Psoas muscle (tissue), 8 donors: ENCODE measurements at regions of chr1 and their contacts with region 1.

Region 1: GRCh38 chr1:234309598-234310459 is 63.4 kb upstream of the COA6 start:
- DNase-seq: peak; percentile 51 to 70
- ATAC-seq: peak; percentile 82 to 96 (median 86)
- H3K4me3 ChIP-seq: peak overlapping the region; percentile 46
- H3K27ac ChIP-seq: no peak overlapping the region
- H3K4me1 ChIP-seq: peaks cover 3% of the 10 kb centered on the region
- H3K27me3 ChIP-seq: no peaks in the 10 kb centered on the region
- CTCF ChIP-seq: peak; percentile 86

Region 2: GRCh38 chr1:234114648-234115307 is 195.1 kb before region 1 on chr1:
- intact Hi-C with region 1: loop called in 1 of 2 experiments (anchors 1 kb)
- DNase-seq: no peak
- ATAC-seq: peak in 3 of 4 donors; percentile 49 to 66 (median 60)
- H3K4me3 ChIP-seq: no peak overlapping the region
- H3K27ac ChIP-seq: no peak overlapping the region
- H3K4me1 ChIP-seq: no peaks in the 10 kb centered on the region
- H3K27me3 ChIP-seq: peaks cover 0 to 12% (median 2%) of the 10 kb centered on the region in 3 donors
- CTCF ChIP-seq: peak; percentile 65

Region 3: DNA sequence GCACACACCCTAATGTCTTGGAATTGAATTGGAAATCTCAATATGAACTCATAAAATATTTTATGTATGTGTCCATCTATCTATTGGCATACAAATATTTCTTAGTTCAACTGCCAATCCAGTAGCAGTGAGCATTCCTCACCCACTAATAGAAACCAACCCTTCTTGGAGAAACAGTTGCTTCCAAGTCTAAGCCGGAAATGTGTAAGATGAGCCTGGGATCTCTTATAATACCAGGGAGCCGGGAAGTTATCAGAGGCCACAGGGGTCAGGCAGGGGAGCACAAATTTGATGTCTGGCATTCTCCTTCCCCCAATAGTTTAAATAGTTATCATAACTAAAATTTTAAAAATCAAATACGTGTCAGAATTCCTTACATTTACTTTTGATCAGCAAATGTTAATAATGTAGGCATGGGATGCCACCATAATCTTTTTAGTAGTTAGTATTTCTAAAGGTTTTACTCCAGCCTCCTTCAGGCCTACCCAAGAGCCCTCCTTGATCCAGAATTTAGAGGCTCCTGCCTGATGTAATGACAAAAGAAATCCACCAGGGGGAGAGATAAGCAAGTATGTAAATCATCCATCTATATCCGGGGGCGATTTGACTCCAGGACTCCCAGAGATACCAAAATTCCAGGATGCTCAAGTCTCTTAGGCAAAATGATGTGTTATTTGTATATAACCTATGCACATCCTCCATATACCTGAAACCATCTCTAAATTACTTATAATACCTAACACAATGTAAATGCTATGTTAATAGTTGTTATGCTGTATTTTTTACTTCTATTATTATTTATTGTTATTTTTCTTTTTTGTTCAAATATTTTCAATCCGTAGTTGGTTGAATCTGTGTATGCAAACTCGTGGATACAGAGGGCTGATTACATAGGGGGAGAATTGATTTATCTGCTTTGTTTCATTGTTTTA is 155.2 kb before region 1 on chr1:
- intact Hi-C with region 1: loop called (anchors 2 to 5 kb)
- DNase-seq: no peak
- ATAC-seq: peak; percentile 44 to 74 (median 68)
- H3K4me3 ChIP-seq: no peak overlapping the region
- H3K27ac ChIP-seq: no peak overlapping the region
- H3K4me1 ChIP-seq: no peaks in the 10 kb centered on the region
- H3K27me3 ChIP-seq: no peaks in the 10 kb centered on the region
- CTCF ChIP-seq: peak; percentile 81

Region 4: DNA sequence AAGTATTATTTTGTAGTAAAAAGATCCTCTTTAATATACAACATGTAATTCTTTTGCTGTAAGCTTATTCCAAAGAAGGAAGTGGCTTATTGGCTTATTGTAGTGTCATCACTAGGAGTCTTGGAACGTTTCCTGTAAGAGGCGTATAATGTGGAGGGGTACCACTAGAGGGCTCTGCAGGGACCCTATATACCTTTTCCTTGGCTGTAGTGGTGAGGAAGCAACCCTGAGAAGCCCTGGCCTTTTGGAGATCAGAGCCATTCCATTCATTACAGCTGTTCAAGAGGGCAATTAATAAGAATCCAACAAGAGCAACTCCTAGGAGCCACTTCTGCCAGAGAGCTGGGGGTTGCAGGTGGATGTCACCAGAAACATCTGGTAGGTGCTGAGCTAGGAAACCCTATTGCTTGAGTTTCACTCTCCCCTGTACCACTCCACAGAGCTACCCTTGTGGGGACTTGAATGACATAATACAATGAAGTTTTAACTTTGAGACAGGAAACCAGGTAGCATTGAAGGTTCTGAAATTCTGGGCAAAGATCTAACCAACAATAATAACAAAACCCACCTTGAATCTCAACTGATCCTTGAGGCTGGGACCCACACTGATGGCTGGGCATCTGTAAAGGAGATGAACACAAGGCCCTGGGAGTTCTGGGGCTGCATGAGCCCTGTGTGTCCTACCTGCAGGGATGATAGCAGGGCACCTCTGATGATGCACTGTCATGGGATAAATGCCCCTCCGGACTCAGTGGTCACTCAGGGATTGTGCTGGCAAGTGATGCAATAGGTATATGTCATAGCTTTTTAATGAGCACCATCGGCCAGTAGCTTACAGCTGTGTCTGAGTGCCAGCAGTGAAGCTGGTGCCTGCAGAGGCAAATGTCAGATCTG is 96.8 kb before region 1 on chr1:
- intact Hi-C with region 1: loop called in 1 of 2 experiments (anchors 5 kb)
- DNase-seq: no peak
- ATAC-seq: peak; percentile 52 to 84 (median 80)
- H3K4me3 ChIP-seq: no peak overlapping the region
- H3K27ac ChIP-seq: no peak overlapping the region
- H3K4me1 ChIP-seq: no peaks in the 10 kb centered on the region
- H3K27me3 ChIP-seq: peaks cover 0 to 15% (median 13%) of the 10 kb centered on the region in 3 donors
- CTCF ChIP-seq: peak; percentile 28

Region 5: GRCh38 chr1:234398849-234399381 is 89.1 kb after region 1 on chr1:
- intact Hi-C with region 1: no loop called
- DNase-seq: no peak
- ATAC-seq: peak; percentile 76 to 88 (median 84)
- H3K4me3 ChIP-seq: peak overlapping the region; percentile 19
- H3K27ac ChIP-seq: peak overlapping the region; percentile 75
- H3K4me1 ChIP-seq: peaks cover 15% of the 10 kb centered on the region
- H3K27me3 ChIP-seq: no peaks in the 10 kb centered on the region
- CTCF ChIP-seq: no peak